Left cardiac atrium (tissue), 4 donors: ENCODE measurements at regions of chr11 and their contacts with region 1.

Region 1: DNA sequence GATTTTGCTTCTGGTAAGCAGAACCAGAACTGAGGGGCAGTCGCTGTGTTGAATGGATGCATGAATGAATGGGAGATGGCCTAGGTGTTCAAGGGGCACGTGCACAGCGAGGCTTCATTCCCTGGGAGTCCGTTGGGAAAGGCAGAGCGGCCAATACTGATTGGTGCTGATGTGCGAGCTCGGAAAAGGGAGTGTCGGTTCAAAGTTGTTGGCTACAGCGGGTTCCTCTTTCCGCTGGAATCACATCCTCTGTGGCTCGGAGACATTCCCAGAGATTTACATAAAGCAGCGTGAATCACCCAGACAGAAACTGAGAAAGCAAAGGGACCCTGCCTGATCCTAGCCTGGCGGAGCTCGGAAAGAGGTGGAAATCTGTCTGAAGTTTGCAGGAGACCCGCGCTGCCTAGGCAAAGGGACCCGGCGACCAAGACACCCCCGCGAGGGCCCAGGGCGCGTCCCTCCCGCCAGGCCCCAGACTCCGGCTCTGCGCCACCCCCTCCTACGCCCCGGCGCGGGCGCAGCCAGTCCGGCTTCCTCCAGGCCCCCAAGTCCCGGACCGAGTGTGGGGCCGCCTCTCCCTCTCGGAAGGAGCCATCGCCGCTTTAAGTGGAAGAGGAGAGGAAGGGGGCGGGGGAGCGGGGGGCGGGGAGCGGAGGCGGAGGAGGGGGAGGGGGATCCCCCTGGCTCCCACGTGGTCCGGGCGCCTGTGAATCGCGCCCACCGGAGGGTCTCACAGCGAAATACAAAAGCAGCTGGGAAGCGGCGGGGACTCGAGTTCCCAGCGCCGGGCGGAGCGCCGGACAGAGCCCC is at the start of gene FJX1:
- DNase-seq: peak; percentile 78
- ATAC-seq: peak; percentile 70 to 84
- total RNA-seq, gene FJX1: 1.1 to 9.4 TPM

Region 2: GRCh38 chr11:35662649-35663407 is 44.9 kb after region 1 on chr11 and contains the start of gene TRIM44:
- intact Hi-C with region 1: loop called in 1 of 2 experiments (anchors 5 kb)
- DNase-seq: peak; percentile 88
- ATAC-seq: peak; percentile 95 to 98
- total RNA-seq, gene TRIM44: 35.0 to 46.0 TPM

Region 3: GRCh38 chr11:35711173-35711910 is 93.5 kb after region 1 on chr11:
- intact Hi-C with region 1: no loop called
- DNase-seq: no peak
- ATAC-seq: no peak

Region 4: DNA sequence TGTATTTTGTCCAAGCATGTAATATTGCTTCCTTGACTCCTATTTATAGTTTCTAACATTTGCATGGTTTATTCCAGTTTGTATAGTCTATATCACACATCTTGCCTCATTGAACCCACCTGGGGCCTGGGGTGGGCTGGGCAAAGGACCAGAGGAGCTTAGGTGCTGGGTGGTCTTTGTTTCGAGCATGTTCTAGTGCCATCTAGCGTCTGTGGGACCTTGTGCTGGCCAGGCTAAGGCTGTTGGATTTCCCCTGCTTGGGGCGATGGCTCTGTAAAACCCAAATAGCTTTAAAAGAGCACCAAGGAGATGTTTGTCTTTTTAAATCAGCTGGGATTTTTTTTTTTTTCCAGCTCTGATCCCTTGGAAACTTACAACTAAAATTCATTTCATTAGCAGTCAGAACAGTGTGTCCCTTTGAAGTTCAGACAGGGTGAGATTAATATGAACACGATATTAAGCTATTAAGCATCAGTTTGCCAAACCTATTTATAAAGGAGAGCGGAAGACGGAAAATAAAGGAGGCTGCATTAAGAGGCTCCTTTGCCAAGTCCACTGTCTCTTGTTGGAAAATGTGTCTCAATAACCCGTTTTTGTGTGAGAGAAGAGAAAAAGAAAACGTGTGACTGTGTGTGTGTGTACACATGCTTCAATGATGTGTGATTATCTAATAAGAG is 514.0 kb after region 1 on chr11:
- intact Hi-C with region 1: loop called (anchors 1 to 5 kb)
- DNase-seq: peak; percentile 66
- ATAC-seq: peak; percentile 84 to 85

Region 5: DNA sequence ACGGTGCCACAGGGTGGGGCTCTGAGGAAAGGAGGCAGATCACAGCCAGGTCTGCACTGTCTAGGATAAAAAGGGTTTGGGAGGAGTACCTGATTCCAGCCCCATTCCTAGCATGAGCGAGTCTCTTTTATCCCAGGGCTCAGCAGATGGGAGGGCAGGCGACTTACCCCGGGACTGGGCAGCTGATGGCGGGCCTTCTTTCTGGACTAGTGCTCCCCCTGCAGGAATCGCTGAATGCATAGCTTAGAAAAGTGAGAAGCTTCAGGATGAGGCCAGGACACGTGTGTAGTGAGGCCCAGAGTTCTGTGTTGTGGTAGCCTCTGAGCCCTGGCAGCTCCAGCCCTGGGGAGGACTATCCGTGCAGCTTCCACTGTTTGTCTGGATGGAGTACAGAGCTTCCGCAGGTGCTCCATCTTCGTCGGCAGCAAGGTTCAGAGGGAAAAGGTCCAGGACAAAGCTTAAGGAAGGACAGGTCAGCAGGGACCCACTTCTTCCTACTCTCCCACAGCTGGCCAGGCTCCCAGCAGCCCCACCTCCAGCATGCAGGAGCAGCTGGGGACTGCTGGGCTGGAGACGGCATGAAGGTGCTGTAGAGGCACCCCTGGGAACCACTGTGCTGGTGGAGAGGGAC is 641.0 kb after region 1 on chr11:
- intact Hi-C with region 1: loop called in 1 of 2 experiments (anchors 10 kb)
- DNase-seq: peak; percentile 54
- ATAC-seq: peak; percentile 71 to 88

Region 6: DNA sequence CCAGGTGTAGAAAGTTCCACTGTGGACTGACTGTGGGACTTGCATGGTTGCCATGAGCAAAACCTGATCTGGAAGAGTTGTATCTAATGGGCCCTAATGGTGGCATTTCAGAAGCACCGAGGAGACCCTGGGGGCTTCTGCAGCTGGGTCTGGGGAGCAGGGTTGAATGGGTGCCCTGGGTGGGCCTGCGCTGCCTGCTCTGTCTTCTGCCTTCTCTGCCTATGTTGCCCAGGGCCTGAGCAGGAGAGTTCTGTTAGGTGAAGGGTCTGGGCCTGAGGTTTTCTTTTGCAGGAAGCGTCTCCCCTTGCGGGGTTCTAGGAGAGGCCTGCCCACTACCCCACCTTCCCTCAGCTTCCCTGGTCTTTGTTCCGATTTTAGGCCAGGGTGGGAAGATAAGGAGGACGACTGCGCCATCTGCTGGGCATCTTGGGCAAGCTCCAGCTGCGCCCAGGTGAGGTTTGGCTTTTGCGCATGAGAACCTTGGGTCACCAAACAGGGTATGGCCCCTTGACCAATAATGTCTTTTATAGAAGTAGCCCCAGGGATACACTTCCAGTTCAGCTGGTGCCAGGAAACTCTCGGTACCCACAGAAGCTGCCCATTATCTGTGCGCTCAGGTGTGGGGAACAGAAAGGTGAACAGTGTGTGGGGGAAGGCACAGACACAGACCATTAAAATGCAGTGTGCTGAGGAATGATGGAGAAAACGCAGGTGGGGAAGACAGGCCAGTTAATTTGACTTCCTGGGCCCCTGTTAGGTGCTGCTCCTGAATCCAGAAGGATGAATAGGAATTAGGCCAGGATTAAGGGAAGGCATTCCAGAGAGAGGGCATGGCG is 648.1 kb after region 1 on chr11:
- intact Hi-C with region 1: loop called in 1 of 2 experiments (anchors 2 kb)
- DNase-seq: peak; percentile 48
- ATAC-seq: peak; percentile 56 to 78